Activated CD4-positive, alpha-beta T cell treated with anti-CD3 and anti-CD28 coated beads for 36 hours (primary cell): ENCODE measurements at regions of chr1 and their contacts with region 1.

Region 1: GRCh38 chr1:111148376-111148881 is 8.4 kb downstream of the CEPT1 start:
- DNase-seq: no peak
- ATAC-seq: peak; percentile 25
- H3K4me3 Mint-ChIP-seq: no peak overlapping the region
- H3K27ac Mint-ChIP-seq: peak overlapping the region; percentile 9
- H3K4me1 Mint-ChIP-seq: peaks cover 80% of the 10 kb centered on the region
- H3K27me3 Mint-ChIP-seq: no peaks in the 10 kb centered on the region

Region 2: DNA sequence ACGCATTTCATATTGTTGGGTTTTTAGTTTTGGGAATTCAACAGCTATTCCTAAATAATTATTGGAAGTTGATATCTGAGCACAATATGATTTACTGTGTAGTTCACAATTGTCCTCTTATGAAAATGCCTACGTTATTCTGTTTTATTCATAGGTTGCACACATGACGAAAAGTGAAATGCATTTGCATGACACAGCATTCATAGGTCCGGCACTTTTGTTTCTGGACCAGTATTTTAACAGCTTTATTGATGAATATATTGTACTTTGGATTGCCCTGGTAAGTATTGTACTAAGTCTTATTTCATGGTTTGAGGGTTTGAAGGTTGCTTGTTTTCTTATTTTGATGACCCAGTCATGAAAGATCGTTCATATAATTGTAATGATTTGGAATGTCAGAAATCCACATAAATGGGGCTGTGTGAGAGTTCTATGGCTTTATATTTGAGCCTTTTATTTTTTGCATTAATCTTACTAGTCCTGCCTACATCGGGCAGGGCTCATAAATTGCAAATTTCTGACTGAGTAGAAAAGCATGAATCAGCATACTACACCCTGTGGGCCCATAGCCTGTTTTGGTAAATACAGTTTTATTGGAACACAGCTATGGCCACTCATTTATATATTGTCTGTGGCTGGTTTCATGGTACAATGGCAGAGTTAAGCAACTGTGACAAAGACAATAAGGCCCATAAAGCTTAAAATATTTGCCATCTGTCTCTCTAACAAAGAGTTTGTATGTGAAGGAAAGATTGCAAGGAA is 35.1 kb after region 1 on chr1:
- CTCF ChIA-PET with region 1: no interaction called
- POLR2A ChIA-PET with region 1: no interaction called
- intact Hi-C with region 1: loop called (anchors 5 kb)
- DNase-seq: no peak
- ATAC-seq: peak; percentile 14
- H3K4me3 Mint-ChIP-seq: no peak overlapping the region
- H3K27ac Mint-ChIP-seq: peak overlapping the region; percentile 48
- H3K4me1 Mint-ChIP-seq: peaks cover 76% of the 10 kb centered on the region
- H3K27me3 Mint-ChIP-seq: no peaks in the 10 kb centered on the region

Region 3: GRCh38 chr1:111214074-111214801 is 65.8 kb after region 1 on chr1:
- CTCF ChIA-PET with region 1: no interaction called
- POLR2A ChIA-PET with region 1: interaction called, 4 read pairs
- intact Hi-C with region 1: loop called in 1 of 2 experiments (anchors 1 kb)
- DNase-seq: no peak
- ATAC-seq: peak; percentile 18
- H3K4me3 Mint-ChIP-seq: peak overlapping the region; percentile 68
- H3K27ac Mint-ChIP-seq: peak overlapping the region; percentile 97
- H3K4me1 Mint-ChIP-seq: peaks cover 80% of the 10 kb centered on the region
- H3K27me3 Mint-ChIP-seq: no peaks in the 10 kb centered on the region